ENCODE measurements at regions of chr6 and their contacts with region 1.

Region 1: GRCh38 chr6:131694831-131695426 is 6.3 kb downstream of the OR2A4 start:
- DNase-seq: peak; percentile 52 to 62
- H3K4me3 ChIP-seq: no peak overlapping the region
- H3K27ac ChIP-seq: no peak overlapping the region
- H3K4me1 ChIP-seq: no peaks in the 10 kb centered on the region
- H3K27me3 ChIP-seq: no peaks in the 10 kb centered on the region
- CTCF ChIP-seq: peak; percentile 73 to 88 (median 78)
- POLR2A ChIP-seq: no peak

Region 2: GRCh38 chr6:131840936-131841583 is 146.1 kb after region 1 on chr6:
- intact Hi-C with region 1: no loop called
- DNase-seq: no peak
- H3K4me3 ChIP-seq: no peak overlapping the region
- H3K27ac ChIP-seq: no peak overlapping the region
- H3K4me1 ChIP-seq: peaks cover 0 to 14% of the 10 kb centered on the region in 2 donors
- H3K27me3 ChIP-seq: no peaks in the 10 kb centered on the region
- CTCF ChIP-seq: no peak
- POLR2A ChIP-seq: no peak

Region 3: GRCh38 chr6:131909408-131910218 is 214.7 kb after region 1 on chr6:
- intact Hi-C with region 1: loop called (anchors 10 kb)
- DNase-seq: peak; percentile 64 to 82
- H3K4me3 ChIP-seq: no peak overlapping the region
- H3K27ac ChIP-seq: no peak overlapping the region
- H3K4me1 ChIP-seq: no peaks in the 10 kb centered on the region
- H3K27me3 ChIP-seq: no peaks in the 10 kb centered on the region
- CTCF ChIP-seq: peak; percentile 78 to 91 (median 84)
- POLR2A ChIP-seq: no peak